ENCODE measurements at regions of chr11 and their contacts with region 1.

Region 1: DNA sequence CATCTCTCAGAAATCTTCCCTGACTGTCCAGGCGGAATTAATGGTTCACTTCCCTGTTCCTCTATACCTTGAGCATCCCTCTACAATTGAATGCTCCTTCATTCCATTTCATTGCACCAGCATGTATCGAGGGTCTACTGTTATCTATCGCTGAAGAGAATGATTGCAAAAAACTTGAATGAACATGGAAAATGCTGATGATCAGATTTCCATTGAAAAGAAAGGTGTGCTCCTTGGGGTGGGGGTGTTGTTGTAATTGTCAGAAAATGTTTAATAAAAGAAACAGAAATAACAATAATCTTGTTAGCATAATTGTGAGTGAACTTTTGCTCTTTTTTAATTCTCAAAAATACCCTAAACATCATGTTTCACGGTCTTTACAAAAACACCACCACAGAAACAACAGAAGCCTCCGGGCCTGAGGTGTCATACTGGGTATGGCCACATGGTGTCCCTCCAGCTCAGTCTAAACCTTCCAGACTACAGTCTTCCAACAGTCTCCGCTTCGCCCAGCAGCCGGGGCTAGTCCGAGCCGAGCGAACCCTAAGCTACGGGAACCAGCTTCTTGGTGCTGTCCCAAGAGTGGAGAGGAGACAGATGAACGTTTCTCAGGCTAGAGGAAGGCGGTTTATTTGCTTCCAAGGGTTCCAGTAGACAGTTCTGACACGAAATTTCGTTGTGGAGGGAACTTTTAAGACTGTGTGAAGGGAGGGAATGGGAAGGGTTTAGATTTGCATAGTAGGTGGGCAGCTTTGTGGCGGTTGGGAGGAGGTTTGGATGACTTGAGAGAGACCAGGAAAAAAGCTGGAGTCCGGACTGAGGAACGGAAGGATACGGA is 75.8 kb upstream of the ZBED5 start:
- DNase-seq: peak; percentile 90 to 95 (median 91)
- ATAC-seq: peak; percentile 90
- H3K4me3 ChIP-seq: peak overlapping the region; percentile 16 to 34
- H3K27ac ChIP-seq: peak overlapping the region; percentile 72 to 79
- H3K4me1 ChIP-seq: peaks cover 4 to 25% of the 10 kb centered on the region in 2 donors
- H3K27me3 ChIP-seq: peaks cover 0 to 41% of the 10 kb centered on the region in 2 donors
- CTCF ChIP-seq: peak; percentile 95 to 97

Region 2: GRCh38 chr11:10878408-10879214 is 55.1 kb before region 1 on chr11:
- intact Hi-C with region 1: loop called in 1 of 2 experiments (anchors 10 kb)
- DNase-seq: peak in 1 of 4 donors; percentile 58
- ATAC-seq: peak; percentile 94
- H3K4me3 ChIP-seq: no peak overlapping the region
- H3K27ac ChIP-seq: peak overlapping the region in 1 of 2 donors; percentile 35
- H3K4me1 ChIP-seq: peaks cover 0 to 8% of the 10 kb centered on the region in 2 donors
- H3K27me3 ChIP-seq: no peaks in the 10 kb centered on the region
- CTCF ChIP-seq: peak; percentile 65 to 71

Region 3: GRCh38 chr11:11125618-11126017 is 191.9 kb after region 1 on chr11:
- intact Hi-C with region 1: no loop called
- DNase-seq: no peak
- ATAC-seq: no peak
- H3K4me3 ChIP-seq: no peak overlapping the region
- H3K27ac ChIP-seq: no peak overlapping the region
- H3K4me1 ChIP-seq: no peaks in the 10 kb centered on the region
- H3K27me3 ChIP-seq: no peaks in the 10 kb centered on the region
- CTCF ChIP-seq: no peak

Region 4: GRCh38 chr11:11135820-11136465 is 202.3 kb after region 1 on chr11:
- intact Hi-C with region 1: no loop called
- DNase-seq: peak in 1 of 4 donors; percentile 22
- ATAC-seq: peak; percentile 24
- H3K4me3 ChIP-seq: no peak overlapping the region
- H3K27ac ChIP-seq: no peak overlapping the region
- H3K4me1 ChIP-seq: no peaks in the 10 kb centered on the region
- H3K27me3 ChIP-seq: no peaks in the 10 kb centered on the region
- CTCF ChIP-seq: no peak

Region 5: GRCh38 chr11:11545285-11546275 is 611.9 kb after region 1 on chr11:
- intact Hi-C with region 1: no loop called
- DNase-seq: no peak
- ATAC-seq: no peak
- H3K4me3 ChIP-seq: no peak overlapping the region
- H3K27ac ChIP-seq: no peak overlapping the region
- H3K4me1 ChIP-seq: peaks cover 4 to 14% of the 10 kb centered on the region in 2 donors
- H3K27me3 ChIP-seq: no peaks in the 10 kb centered on the region
- CTCF ChIP-seq: no peak

Measured in left lung (tissue), 14 donors.